ENCODE measurements at regions of chr11 and their contacts with region 1.

Region 1: DNA sequence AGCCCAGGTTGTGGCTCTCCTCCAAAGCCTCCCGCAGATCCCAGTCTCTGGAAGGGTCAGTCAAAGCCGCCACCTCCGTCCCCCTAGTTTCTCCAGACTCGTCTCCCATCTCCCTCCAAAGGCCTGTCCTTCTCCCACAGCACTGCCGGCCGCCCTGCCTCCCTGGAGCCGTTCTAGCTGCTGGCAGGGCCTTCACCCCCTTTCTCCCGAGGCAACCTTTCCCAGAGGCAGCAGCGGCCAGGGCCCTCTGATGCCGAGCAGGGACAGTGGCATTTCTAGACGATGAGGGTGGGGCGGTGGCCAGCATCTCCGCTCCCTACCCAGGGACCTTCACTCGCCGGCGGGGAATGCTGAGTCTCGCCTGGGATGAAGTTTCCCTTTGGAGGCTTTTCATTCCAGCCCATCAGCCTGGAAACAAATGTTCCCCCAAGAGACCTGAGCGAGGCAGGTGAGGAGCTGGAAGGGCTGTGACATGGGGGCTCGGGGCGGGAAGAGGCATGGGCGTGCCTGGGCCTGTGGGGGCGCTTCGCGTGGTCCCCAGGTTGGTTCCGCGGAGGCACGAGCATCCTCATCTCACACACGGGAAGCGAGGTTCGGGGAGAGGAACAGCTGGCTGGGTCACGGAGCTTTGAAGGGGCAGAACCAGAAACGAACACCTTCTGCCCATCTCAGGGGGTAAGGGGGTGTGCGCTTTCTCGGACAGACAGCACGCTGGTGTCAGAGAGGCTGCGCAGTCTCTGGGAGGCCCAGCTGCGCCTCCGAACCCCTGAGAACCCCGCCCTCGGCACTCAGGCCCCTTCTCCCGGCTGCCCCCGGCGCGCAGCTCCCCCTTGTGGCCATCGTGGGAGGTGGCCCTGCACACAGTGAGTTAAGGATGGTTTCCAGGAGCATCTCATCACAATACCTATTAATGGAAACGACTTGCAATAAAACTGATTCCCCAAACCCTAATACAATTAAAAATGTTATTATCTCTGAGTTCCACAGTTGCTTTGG is 18.1 kb upstream of the KLHL35 start:
- H3K4me3 ChIP-seq: no peak overlapping the region
- H3K27ac ChIP-seq: no peak overlapping the region
- H3K4me1 ChIP-seq: no peaks in the 10 kb centered on the region
- CTCF ChIP-seq: peak; percentile 48

Region 2: DNA sequence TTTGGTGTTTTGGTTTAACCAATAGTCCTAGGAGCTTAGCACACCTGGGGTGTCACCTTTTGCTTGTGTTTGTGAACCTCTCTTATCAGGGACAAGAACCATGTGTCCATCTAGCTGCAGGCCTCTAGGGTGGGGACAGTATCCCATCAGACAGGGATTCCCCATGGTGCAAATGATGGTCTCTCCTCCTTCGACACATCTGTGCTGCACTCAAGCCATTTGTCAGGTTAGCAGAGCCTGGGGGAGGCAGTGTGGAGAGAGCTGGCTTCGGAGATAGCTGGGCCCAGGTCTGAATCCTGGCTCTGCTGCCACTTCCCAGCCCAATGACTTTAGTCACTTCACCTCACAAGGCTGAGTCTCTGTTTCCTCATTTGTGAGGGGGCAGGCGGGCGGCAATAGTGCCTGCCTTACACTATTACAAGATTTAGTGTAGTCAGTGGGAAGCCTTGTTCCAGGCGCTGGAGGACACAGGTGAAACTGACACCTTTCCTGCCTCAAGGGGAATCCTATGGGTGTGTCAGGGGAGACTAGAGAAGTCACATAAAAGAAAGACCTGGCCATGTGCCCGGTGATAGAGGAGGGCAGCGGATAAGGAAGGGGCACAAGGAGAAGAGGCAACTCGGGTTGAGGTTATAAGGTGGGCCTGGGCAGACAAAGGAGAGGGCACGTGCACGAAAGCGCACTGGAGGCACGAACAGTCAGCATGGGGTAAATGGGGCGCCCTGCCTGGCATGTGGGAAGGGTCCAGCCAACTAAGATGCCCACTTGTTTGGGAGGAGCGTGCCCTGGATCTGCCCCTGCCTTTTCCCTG is 30.7 kb before region 1 on chr11:
- CTCF ChIA-PET with region 1: no interaction called
- POLR2A ChIA-PET with region 1: no interaction called
- H3K4me3 ChIP-seq: no peak overlapping the region
- H3K27ac ChIP-seq: no peak overlapping the region
- H3K4me1 ChIP-seq: no peaks in the 10 kb centered on the region
- CTCF ChIP-seq: no peak

Region 3: GRCh38 chr11:75462117-75462812 is 11.1 kb after region 1 on chr11:
- CTCF ChIA-PET with region 1: interaction called, 17 read pairs
- POLR2A ChIA-PET with region 1: no interaction called
- H3K4me3 ChIP-seq: no peak overlapping the region
- H3K27ac ChIP-seq: no peak overlapping the region
- H3K4me1 ChIP-seq: no peaks in the 10 kb centered on the region
- CTCF ChIP-seq: no peak

Region 4: DNA sequence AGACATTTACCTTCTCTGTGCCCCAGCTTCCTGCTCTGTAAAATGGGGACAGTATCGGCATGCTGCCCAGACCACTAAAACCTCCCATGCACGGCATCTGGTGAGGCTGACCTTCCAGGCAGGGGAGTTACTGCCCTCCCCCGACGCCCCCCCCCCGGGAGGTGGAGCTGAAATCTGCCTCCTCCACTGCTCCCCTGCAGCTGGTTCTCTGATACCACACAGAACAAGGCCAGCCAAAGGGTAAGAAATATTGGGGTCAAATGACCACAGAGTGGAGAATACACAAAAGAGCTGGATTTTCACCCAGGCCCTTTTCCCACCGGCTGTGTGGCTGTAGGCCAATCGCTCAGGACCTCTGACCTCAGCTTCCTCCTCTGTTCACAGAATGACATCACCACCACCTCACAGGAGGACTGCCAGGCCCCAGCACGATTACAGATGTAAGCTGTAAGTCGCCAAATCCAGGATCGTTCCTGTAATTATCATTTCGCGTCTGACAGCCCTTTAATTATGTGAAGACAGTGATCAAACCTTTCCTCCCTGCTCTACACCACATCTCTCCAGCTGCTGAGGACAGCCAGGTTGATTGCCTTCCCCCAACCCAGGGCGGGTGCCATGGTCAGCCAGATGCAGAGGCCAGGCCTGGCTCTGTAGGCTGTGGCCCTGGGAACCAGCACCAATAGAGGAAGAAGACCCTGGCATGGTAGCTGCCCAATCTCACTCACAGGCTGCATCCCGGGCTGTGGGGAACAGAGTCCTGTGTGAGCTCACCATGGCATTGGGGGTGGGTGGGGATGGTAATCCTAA is 17.6 kb after region 1 on chr11:
- CTCF ChIA-PET with region 1: interaction called, 11 read pairs
- POLR2A ChIA-PET with region 1: no interaction called
- H3K4me3 ChIP-seq: no peak overlapping the region
- H3K27ac ChIP-seq: no peak overlapping the region
- H3K4me1 ChIP-seq: no peaks in the 10 kb centered on the region
- CTCF ChIP-seq: no peak

Measured in HEK293 (cell line).